Sigmoid colon (tissue), 7 donors: ENCODE measurements at regions of chr1 and their contacts with region 1.

Region 1: DNA sequence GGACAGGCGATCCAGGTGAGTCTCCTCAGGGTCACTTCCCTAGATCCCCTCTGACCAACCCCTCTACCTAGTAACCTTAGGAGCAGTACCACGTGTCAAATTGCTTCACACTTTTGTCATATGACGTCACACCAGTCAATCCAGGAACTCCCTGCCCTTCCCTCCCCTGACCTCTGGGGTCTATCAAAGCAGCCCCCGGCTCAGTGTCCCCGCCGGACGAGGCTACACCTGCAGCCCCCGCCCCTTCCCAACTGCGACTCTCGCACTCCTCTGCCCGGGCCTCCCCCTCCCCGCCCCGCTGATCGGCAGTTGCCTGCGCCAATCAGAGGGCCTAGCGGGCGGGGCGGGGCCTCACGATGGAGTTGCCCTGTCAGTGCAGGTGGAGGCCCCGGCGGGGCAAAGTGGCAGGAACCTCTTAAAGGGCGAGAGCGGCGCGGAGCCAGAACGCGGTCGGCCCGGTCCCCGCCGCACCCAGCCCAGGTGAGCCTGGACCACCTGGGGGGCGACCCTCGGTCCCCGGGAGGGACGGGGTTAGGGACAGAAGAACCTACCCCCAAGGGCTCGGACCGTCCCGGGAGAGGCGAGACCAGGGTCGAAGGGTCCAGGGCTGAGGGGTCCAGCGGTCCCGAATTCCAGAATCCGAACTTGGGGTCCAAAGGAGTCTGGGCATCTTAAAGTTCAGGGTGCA is 27.5 kb upstream of the EPB41 start:
- DNase-seq: peak; percentile 90
- H3K4me3 ChIP-seq: peak overlapping the region; percentile 80 to 95 (median 90)
- H3K27ac ChIP-seq: peak overlapping the region; percentile 77 to 82 (median 81)
- H3K4me1 ChIP-seq: peaks cover 0 to 54% (median 41%) of the 10 kb centered on the region in 4 donors
- H3K27me3 ChIP-seq: no peaks in the 10 kb centered on the region
- CTCF ChIP-seq: no peak
- EP300 ChIP-seq: no peak
- POLR2A ChIP-seq: peak in 1 of 2 donors; percentile 48

Region 2: DNA sequence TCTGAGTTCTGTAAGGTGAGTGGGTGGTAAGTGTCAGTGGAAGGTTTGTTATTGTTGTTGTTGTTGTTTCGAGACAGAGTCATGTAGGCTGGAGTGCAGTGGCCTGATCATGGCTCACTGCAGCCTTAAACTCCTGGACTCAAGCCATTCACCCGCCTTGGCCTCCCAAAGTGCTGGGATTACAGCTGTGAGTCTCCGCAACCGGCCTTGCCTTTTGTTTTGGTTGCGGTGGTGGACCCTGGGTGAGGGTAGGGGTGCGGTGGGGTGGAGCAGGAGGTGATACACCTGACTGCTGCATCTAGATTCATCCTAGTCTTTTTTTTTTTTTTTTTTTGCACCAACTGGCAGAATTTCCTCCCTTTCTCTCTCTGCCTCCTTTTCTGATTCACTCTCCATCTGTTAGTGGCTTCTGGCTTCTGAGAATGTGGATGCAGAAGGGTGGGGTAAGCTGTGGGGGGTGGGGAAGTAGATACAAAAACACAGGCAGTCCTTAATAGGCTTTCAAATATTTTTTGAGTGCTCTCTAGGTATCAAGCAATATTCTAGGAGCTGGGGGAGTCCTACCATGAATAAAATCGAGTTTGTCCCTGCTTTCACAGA is 222.9 kb before region 1 on chr1:
- intact Hi-C with region 1: no loop called
- DNase-seq: no peak
- H3K4me3 ChIP-seq: no peak overlapping the region
- H3K27ac ChIP-seq: no peak overlapping the region
- H3K4me1 ChIP-seq: peaks cover 0 to 12% (median 10%) of the 10 kb centered on the region in 4 donors
- H3K27me3 ChIP-seq: no peaks in the 10 kb centered on the region
- CTCF ChIP-seq: no peak
- EP300 ChIP-seq: no peak
- POLR2A ChIP-seq: no peak

Region 3: GRCh38 chr1:28914228-28915030 is 27.6 kb after region 1 on chr1 and contains the start of gene EPB41:
- intact Hi-C with region 1: loop called (anchors 2 kb)
- DNase-seq: peak; percentile 95
- H3K4me3 ChIP-seq: peak within 1 kb of the TSS; percentile 40 to 89 (median 63)
- H3K27ac ChIP-seq: peak within 1 kb of the TSS; percentile 66 to 78 (median 72)
- H3K4me1 ChIP-seq: peaks cover 0 to 15% (median 9%) of the 10 kb centered on the region in 4 donors
- H3K27me3 ChIP-seq: no peaks in the 10 kb centered on the region
- CTCF ChIP-seq: no peak
- EP300 ChIP-seq: peak in 1 of 4 donors; percentile 18
- POLR2A ChIP-seq: no peak
- total RNA-seq, gene EPB41: 23.2 to 33.4 (median 27.4) TPM

Region 4: GRCh38 chr1:29033829-29034466 is 147.1 kb after region 1 on chr1:
- intact Hi-C with region 1: loop called (anchors 1 kb)
- DNase-seq: no peak
- H3K4me3 ChIP-seq: no peak overlapping the region
- H3K27ac ChIP-seq: no peak overlapping the region
- H3K4me1 ChIP-seq: peaks cover 0 to 7% (median 0%) of the 10 kb centered on the region in 4 donors
- H3K27me3 ChIP-seq: no peaks in the 10 kb centered on the region
- CTCF ChIP-seq: peak; percentile 29 to 69 (median 64)
- EP300 ChIP-seq: no peak
- POLR2A ChIP-seq: no peak

Region 5: GRCh38 chr1:29136391-29136915 is 249.6 kb after region 1 on chr1:
- intact Hi-C with region 1: no loop called
- DNase-seq: no peak
- H3K4me3 ChIP-seq: no peak overlapping the region
- H3K27ac ChIP-seq: no peak overlapping the region
- H3K4me1 ChIP-seq: peaks cover 0 to 15% (median 9%) of the 10 kb centered on the region in 4 donors
- H3K27me3 ChIP-seq: no peaks in the 10 kb centered on the region
- CTCF ChIP-seq: no peak
- EP300 ChIP-seq: no peak
- POLR2A ChIP-seq: no peak

Region 6: GRCh38 chr1:29181413-29182225 is 294.7 kb after region 1 on chr1 and contains the start of gene SRSF4:
- intact Hi-C with region 1: loop called (anchors 5 kb)
- DNase-seq: peak; percentile 100
- H3K4me3 ChIP-seq: peak within 1 kb of the TSS; percentile 80 to 97 (median 92)
- H3K27ac ChIP-seq: peak within 1 kb of the TSS; percentile 98 to 100 (median 99)
- H3K4me1 ChIP-seq: peaks cover 0 to 49% (median 46%) of the 10 kb centered on the region in 4 donors
- H3K27me3 ChIP-seq: no peaks in the 10 kb centered on the region
- CTCF ChIP-seq: peak in 3 of 4 experiments; percentile 50 to 66 (median 64)
- EP300 ChIP-seq: no peak
- POLR2A ChIP-seq: peak; percentile 18 to 35
- total RNA-seq, gene SRSF4: 80.3 to 110 (median 96.6) TPM

Region 7: GRCh38 chr1:30707412-30708360 is 1820.8 kb after region 1 on chr1:
- intact Hi-C with region 1: loop called (anchors 5 kb)
- DNase-seq: peak; percentile 87
- H3K4me3 ChIP-seq: no peak overlapping the region
- H3K27ac ChIP-seq: no peak overlapping the region
- H3K4me1 ChIP-seq: peaks cover 0 to 44% (median 36%) of the 10 kb centered on the region in 4 donors
- H3K27me3 ChIP-seq: no peaks in the 10 kb centered on the region
- CTCF ChIP-seq: peak; percentile 81 to 94 (median 90)
- EP300 ChIP-seq: no peak
- POLR2A ChIP-seq: no peak